ENCODE measurements at regions of chr10 and their contacts with region 1.

Region 1: DNA sequence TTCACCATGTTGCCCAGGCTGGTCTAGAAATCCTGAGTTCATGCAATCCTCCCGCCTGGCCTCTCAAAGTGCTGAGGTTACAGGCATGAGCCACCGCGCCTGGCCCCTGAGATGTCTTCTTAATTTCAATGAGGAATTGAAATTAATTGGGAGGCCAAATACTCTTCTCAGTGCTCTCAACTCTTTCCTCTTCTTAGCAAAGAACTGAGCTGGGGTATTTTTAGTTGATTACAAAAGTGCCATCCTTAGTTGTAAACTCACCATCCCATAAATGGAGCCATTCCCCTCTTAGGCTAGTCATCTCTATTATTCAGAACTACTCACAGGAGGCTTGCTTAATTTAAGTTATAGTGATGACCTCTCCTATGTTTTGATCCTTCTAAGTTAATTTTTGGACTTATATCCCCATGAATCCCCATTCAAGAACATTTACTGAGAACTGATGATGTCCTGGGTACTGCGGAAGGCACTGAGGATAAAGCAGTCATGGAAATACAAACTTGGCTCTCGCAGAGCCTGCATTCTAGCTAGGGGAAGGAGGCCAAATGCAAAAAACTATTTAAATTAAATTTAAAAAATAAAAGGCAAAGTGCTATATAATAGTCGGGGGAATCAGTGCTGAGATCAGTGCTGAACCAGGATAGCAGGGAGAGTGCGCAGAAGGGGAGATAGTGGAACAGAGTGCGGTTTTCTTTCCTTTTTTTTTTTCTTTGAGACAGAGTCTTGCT is 145.3 kb downstream of the SFMBT2 start:
- DNase-seq: no peak
- ATAC-seq: no peak
- H3K4me3 ChIP-seq: no peak overlapping the region
- H3K4me3 Mint-ChIP-seq: no peak overlapping the region
- H3K27ac ChIP-seq: no peak overlapping the region
- H3K27ac Mint-ChIP-seq: peak overlapping the region in 5 of 9 donors; percentile 36 to 84 (median 76)
- H3K4me1 ChIP-seq: peaks cover 6 to 13% of the 10 kb centered on the region in 2 donors
- H3K4me1 Mint-ChIP-seq: peaks cover 16 to 52% (median 38%) of the 10 kb centered on the region in 7 donors
- H3K27me3 ChIP-seq: no peaks in the 10 kb centered on the region
- H3K27me3 Mint-ChIP-seq: no peaks in the 10 kb centered on the region

Region 2: DNA sequence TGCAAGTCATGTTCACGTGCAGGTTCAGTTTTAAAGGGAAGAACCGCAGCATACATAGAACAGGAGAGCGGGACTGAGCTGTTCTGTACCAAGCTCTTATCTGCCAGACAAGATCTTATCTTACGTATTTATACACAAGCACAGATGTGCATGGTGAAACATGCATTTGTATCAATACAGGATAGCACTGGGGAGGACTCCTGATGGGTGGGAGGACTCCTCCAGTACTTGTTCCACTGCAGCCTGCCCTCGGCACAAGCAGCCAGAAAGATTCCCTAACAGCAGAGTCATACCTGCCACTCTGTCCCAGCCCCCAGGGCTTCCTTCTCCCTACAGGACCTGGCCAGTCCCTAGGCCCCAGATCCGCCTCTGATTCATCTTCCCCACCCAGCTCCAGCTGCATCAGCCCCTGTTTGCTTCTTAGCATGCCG is 672.3 kb before region 1 on chr10:
- CTCF ChIA-PET with region 1: no interaction called
- POLR2A ChIA-PET with region 1: no interaction called
- intact Hi-C with region 1: loop called in 1 of 2 experiments (anchors 1 kb)
- DNase-seq: peak in 5 of 9 donors; percentile 29 to 76 (median 61)
- ATAC-seq: peak; percentile 73
- H3K4me3 ChIP-seq: peak overlapping the region; percentile 38
- H3K4me3 Mint-ChIP-seq: peak overlapping the region; percentile 53 to 97 (median 80)
- H3K27ac ChIP-seq: peak overlapping the region; percentile 94
- H3K27ac Mint-ChIP-seq: peak overlapping the region; percentile 96 to 99 (median 97)
- H3K4me1 ChIP-seq: peaks cover 34 to 95% of the 10 kb centered on the region in 2 donors
- H3K4me1 Mint-ChIP-seq: peaks cover 45 to 100% (median 98%) of the 10 kb centered on the region in 7 donors
- H3K27me3 ChIP-seq: no peaks in the 10 kb centered on the region
- H3K27me3 Mint-ChIP-seq: no peaks in the 10 kb centered on the region

Region 3: DNA sequence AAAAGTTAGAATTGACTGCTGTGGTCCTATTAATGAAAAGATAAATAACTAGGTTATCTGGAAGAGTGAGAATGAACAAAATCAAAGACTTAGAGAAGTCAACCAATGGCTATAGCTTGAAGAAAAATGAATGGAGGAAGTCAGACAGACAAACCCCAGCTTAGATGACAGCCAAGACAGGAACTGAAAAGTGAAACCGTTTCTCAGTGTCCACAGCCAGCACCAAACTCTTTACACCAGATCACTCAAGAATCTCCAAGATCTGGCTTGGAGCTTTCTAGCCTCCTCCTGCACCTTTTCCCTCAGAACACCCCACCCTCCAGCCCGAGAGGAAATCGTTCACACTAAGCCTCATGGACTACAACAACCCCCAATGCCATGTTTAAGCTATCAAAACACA is 21.7 kb before region 1 on chr10:
- CTCF ChIA-PET with region 1: interaction called, 3 read pairs
- POLR2A ChIA-PET with region 1: no interaction called
- intact Hi-C with region 1: loop called in 1 of 2 experiments (anchors 1 kb)
- DNase-seq: peak in 1 of 9 donors; percentile 22
- ATAC-seq: peak; percentile 79
- H3K4me3 ChIP-seq: no peak overlapping the region
- H3K4me3 Mint-ChIP-seq: peak overlapping the region in 9 of 10 donors; percentile 9 to 80 (median 48)
- H3K27ac ChIP-seq: no peak overlapping the region
- H3K27ac Mint-ChIP-seq: peak overlapping the region; percentile 56 to 91 (median 77)
- H3K4me1 ChIP-seq: peaks cover 9 to 16% of the 10 kb centered on the region in 2 donors
- H3K4me1 Mint-ChIP-seq: peaks cover 30 to 65% (median 51%) of the 10 kb centered on the region in 7 donors
- H3K27me3 ChIP-seq: no peaks in the 10 kb centered on the region
- H3K27me3 Mint-ChIP-seq: no peaks in the 10 kb centered on the region

Region 4: GRCh38 chr10:7285522-7286322 is 20.2 kb after region 1 on chr10:
- CTCF ChIA-PET with region 1: no interaction called
- POLR2A ChIA-PET with region 1: interaction called, 6 read pairs
- intact Hi-C with region 1: loop called in 1 of 2 experiments (anchors 2 kb)
- DNase-seq: no peak
- ATAC-seq: no peak
- H3K4me3 ChIP-seq: no peak overlapping the region
- H3K4me3 Mint-ChIP-seq: no peak overlapping the region
- H3K27ac ChIP-seq: no peak overlapping the region
- H3K27ac Mint-ChIP-seq: peak overlapping the region in 5 of 9 donors; percentile 1 to 51 (median 2)
- H3K4me1 ChIP-seq: no peaks in the 10 kb centered on the region
- H3K4me1 Mint-ChIP-seq: peaks cover 20 to 62% (median 54%) of the 10 kb centered on the region in 7 donors
- H3K27me3 ChIP-seq: no peaks in the 10 kb centered on the region
- H3K27me3 Mint-ChIP-seq: no peaks in the 10 kb centered on the region

Measured in naive thymus-derived CD4-positive, alpha-beta T cell (primary cell).